ENCODE measurements at regions of chr6 and their contacts with region 1.

Region 1: DNA sequence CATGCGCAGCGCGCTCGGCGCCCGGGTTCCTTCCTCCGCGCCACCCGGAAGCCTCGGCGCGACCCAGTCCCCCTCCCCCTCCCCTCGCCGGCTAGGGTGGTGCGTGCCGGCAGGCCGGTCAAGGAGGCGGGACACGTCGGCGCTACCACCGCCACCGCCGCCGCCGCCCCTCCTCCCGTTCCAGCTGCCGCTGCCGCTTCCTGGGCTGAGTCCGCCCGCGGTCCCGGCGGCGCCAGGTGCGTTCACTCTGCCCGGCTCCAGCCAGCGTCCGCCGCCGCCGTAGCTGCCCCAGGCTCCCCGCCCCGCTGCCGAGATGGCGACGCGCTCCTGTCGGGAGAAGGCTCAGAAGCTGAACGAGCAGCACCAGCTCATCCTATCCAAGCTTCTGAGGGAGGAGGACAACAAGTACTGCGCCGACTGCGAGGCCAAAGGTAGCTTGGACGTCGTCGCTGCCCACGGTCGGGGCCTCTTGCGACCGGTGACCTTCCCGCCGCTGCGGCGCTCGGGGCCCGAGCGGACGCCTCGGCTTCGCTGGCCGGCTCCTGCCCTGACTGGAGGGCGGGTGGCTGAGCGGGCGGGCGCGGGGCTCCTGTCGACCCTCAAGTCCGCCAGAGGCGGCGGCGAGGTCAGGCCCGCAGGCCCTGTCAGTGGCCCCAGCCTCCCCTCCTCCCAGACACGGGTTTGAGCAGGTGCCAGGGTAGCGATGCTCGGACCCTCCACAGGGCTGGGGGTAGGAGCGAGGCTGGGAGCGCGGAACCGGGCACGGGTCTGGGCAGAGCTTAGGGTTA is at the start of gene SMAP1:
- DNase-seq: peak; percentile 83 to 93
- H3K4me3 ChIP-seq: peak within 1 kb of the TSS; percentile 80 to 98 (median 86)
- H3K27ac ChIP-seq: peak within 1 kb of the TSS; percentile 63; the same call in 1 of the 2 replicates
- H3K4me1 ChIP-seq: peaks cover 0 to 6% (median 3%) of the 10 kb centered on the region in 4 experiments; a peak in 3 of 7 replicates
- H3K27me3 ChIP-seq: no peaks in the 10 kb centered on the region
- CTCF ChIP-seq: peak in 1 of 3 experiments; percentile 7; a peak in 2 of 4 replicates
- EP300 ChIP-seq: peak in 1 of 2 experiments; percentile 42; a peak in 1 of 3 replicates
- POLR2A ChIP-seq: peak; percentile 68 to 72
- RAD21 ChIP-seq: peak; percentile 5 to 30; a peak in 1 of 4 replicates
- total RNA-seq, gene SMAP1: 31.8 and 32.4 TPM in 2 replicates

Region 2: DNA sequence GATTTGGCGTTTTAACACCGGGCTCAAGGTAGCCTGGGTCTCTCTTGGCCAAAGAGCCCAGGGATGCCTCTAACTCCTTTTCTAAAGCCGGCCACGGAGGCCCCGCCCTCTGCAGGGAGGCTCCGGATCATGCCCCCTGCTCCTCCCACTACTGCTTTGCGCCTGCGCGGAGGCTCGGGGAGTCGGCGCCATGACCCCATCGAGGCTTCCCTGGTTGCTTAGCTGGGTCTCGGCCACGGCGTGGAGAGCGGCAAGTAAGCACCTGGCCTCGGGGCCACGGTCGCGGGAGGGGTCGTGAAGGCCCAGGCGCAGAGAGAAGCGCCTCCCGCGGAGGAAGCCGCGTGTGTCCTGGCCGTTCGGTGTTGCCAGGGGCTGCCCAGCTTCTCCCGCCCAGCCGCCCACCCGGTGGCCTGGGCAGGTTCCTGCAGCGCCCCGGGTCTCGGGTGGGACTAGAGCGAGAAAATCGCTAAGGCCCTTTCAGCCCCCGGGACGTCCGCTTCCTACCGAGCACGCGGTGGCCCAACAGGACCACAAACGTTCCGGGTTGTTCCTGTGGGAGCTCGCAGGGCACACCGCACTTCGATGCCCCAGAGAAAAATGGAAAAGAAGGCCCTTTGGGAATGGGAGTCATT is 101.0 kb before region 1 on chr6 and contains the start of gene SDHAF4:
- CTCF ChIA-PET with region 1: interaction called, 3 read pairs
- POLR2A ChIA-PET with region 1: interaction called, 16 read pairs
- DNase-seq: peak; percentile 78 to 97
- H3K4me3 ChIP-seq: peak within 1 kb of the TSS; percentile 76 to 93 (median 88)
- H3K27ac ChIP-seq: peak within 1 kb of the TSS; percentile 91
- H3K4me1 ChIP-seq: peaks cover 0 to 6% (median 3%) of the 10 kb centered on the region in 4 experiments; a peak in 4 of 7 replicates
- H3K27me3 ChIP-seq: no peaks in the 10 kb centered on the region
- CTCF ChIP-seq: no peak
- EP300 ChIP-seq: no peak
- POLR2A ChIP-seq: peak; percentile 86 to 97
- RAD21 ChIP-seq: 0 out of 4 replicates have a peak, but pooled peaks of 1 of the 2 experiments have one; percentile 1
- total RNA-seq, gene SDHAF4: 14.8 and 14.9 TPM in 2 replicates

Measured in H1 (cell line).